Breast epithelium (tissue), 4 donors: ENCODE measurements at regions of chr1 and their contacts with region 1.

Region 1: GRCh38 chr1:179016747-179017549 is 8.7 kb upstream of the FAM20B start:
- DNase-seq: peak; percentile 80 to 93
- H3K4me3 ChIP-seq: no peak overlapping the region
- H3K27ac ChIP-seq: peak overlapping the region; percentile 20 to 48
- H3K4me1 ChIP-seq: no peaks in the 10 kb centered on the region
- H3K27me3 ChIP-seq: no peaks in the 10 kb centered on the region
- CTCF ChIP-seq: no peak
- POLR2A ChIP-seq: no peak

Region 2: GRCh38 chr1:178532392-178532791 is 484.6 kb before region 1 on chr1:
- intact Hi-C with region 1: loop called (anchors 10 kb)
- DNase-seq: peak; percentile 67 to 85
- H3K4me3 ChIP-seq: peak overlapping the region in 1 of 3 donors; percentile 4
- H3K27ac ChIP-seq: no peak overlapping the region
- H3K4me1 ChIP-seq: no peaks in the 10 kb centered on the region
- H3K27me3 ChIP-seq: no peaks in the 10 kb centered on the region
- CTCF ChIP-seq: peak; percentile 74 to 93 (median 89)
- POLR2A ChIP-seq: no peak